Activated B cell treated with CpG ODN at 0.5 μM for 24 hours (primary cell): ENCODE measurements at regions of chr7 and their contacts with region 1.

Region 1: DNA sequence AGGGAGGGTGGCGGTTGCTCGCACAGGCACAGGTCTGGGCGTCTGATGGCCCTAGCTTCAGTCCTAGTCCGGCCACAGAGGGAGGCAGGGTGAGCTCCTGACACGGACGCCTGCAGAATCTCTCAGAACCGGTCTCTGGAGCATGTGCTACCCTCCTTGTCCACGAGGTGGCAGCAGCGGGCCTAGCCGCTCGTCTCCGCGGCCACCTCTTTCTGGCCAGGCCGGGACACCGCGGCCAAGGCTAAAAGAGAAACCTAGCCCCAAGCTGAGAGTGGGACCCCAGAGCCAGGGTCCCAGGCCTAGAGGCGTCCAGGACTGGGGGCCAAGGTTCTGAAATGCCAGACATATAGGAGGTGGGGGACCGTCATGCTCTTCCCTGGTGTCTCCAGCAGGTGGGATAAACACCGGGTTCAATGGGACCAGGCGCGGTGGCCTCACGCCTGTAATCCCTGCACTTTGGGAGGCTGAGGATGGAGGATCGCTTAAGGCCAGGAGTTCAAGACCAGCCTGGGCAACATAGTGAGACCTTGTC is 3.2 kb upstream of the LAT2 start:
- DNase-seq: peak; percentile 88
- ATAC-seq: peak; percentile 41
- H3K4me3 Mint-ChIP-seq: peak overlapping the region; percentile 63
- H3K27ac Mint-ChIP-seq: peak overlapping the region; percentile 50
- H3K4me1 Mint-ChIP-seq: peaks cover 61% of the 10 kb centered on the region
- H3K27me3 Mint-ChIP-seq: no peaks in the 10 kb centered on the region
- CTCF ChIP-seq: peak; percentile 31

Region 2: DNA sequence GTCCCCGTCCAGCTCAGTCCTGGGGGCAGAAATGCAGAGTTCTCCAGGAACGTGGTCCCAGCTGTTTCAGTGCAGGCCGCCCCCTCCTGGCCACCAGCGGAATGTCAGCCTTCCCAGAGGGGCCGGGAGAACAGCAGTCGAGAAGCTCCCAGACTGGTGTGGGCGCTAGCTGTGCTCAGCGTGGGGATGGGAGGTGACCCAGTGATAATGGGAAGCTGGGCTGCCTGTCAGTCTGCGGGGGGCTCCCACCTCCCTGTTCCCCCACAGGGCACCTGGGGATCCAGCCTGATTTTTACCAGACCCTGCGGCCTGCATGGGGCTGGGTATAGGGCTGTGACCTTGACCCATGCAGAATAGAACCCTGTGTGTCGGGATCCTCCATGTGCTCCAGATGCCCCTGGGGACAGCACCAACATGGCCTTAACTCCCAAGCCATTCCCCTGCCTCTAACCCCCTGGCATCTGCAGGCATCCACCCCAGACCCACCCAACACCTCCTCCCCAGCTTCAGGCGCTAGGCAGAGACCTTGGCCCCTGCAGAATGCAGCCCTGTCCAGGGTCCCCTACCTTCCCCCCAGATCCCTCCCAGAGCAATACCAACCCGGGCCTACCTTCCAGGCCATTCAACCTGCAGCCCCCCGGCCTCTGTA is 179.6 kb before region 1 on chr7:
- CTCF ChIA-PET with region 1: no interaction called
- POLR2A ChIA-PET with region 1: no interaction called
- intact Hi-C with region 1: no loop called
- DNase-seq: peak; percentile 62
- ATAC-seq: peak; percentile 85
- H3K4me3 Mint-ChIP-seq: no peak overlapping the region
- H3K27ac Mint-ChIP-seq: no peak overlapping the region
- H3K4me1 Mint-ChIP-seq: peaks cover 8% of the 10 kb centered on the region
- H3K27me3 Mint-ChIP-seq: peaks cover 56% of the 10 kb centered on the region
- CTCF ChIP-seq: peak; percentile 76

Region 3: DNA sequence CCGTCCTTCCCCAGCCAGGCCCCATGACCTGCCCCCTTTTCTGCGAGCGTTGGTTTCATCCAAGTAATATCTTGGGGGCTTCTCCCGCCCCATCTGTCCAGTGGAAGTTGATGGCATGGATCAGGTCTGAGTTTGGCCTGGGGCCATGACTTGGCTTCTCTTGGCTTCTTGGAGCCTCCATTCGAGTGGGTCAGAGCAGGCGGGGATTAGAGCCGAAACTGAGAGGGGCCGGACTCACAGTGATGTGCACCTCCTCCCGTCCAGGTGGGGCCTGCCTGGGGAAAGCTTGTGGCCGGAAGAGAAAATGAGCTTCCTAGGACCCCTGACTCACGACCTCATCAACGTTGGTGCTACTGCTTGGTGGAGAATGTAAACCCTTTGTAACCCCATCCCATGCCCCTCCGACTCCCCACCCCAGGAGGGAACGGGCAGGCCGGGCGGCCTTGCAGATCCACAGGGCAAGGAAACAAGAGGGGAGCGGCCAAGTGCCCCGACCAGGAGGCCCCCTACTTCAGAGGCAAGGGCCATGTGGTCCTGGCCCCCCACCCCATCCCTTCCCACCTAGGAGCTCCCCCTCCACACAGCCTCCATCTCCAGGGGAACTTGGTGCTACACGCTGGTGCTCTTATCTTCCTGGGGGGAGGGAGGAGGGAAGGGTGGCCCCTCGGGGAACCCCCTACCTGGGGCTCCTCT is 138.1 kb before region 1 on chr7:
- CTCF ChIA-PET with region 1: interaction called, 10 read pairs
- POLR2A ChIA-PET with region 1: interaction called, 3 read pairs
- intact Hi-C with region 1: loop called (anchors 1 kb)
- DNase-seq: no peak
- ATAC-seq: no peak
- H3K4me3 Mint-ChIP-seq: no peak overlapping the region
- H3K27ac Mint-ChIP-seq: no peak overlapping the region
- H3K4me1 Mint-ChIP-seq: peaks cover 2% of the 10 kb centered on the region
- H3K27me3 Mint-ChIP-seq: no peaks in the 10 kb centered on the region
- CTCF ChIP-seq: no peak

Region 4: DNA sequence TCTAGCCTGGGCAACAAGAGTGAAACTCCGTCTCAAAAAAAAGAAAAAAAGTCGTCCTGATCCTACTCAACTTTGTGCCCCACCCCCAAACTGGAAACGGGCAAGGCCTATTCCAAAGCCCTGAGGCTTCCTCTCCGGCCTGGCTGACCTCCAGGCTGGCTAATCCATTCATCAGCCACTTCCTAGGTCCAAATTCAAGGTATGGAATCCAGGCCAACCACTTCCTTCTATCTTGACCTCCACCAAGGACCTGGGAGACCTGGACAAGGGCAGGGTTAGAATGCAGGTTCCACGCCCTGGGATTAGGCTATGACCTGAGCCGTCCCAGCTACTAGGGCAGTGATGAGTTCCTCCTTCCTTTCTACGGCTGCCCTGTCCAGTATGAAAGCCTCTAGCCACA is 52.9 kb before region 1 on chr7:
- CTCF ChIA-PET with region 1: no interaction called
- POLR2A ChIA-PET with region 1: no interaction called
- intact Hi-C with region 1: no loop called
- DNase-seq: no peak
- ATAC-seq: no peak
- H3K4me3 Mint-ChIP-seq: no peak overlapping the region
- H3K27ac Mint-ChIP-seq: no peak overlapping the region
- H3K4me1 Mint-ChIP-seq: peaks cover 4% of the 10 kb centered on the region
- H3K27me3 Mint-ChIP-seq: peaks cover 2% of the 10 kb centered on the region
- CTCF ChIP-seq: no peak

Region 5: GRCh38 chr7:74217455-74218342 is 11.0 kb after region 1 on chr7:
- CTCF ChIA-PET with region 1: interaction called, 11 read pairs
- POLR2A ChIA-PET with region 1: interaction called, 87 read pairs
- intact Hi-C with region 1: loop called (anchors 1 kb)
- DNase-seq: peak; percentile 51
- ATAC-seq: peak; percentile 59
- H3K4me3 Mint-ChIP-seq: peak overlapping the region; percentile 69
- H3K27ac Mint-ChIP-seq: peak overlapping the region; percentile 90
- H3K4me1 Mint-ChIP-seq: peaks cover 63% of the 10 kb centered on the region
- H3K27me3 Mint-ChIP-seq: no peaks in the 10 kb centered on the region
- CTCF ChIP-seq: no peak

Region 6: GRCh38 chr7:74236284-74236683 is 29.6 kb after region 1 on chr7:
- CTCF ChIA-PET with region 1: interaction called, 16 read pairs
- POLR2A ChIA-PET with region 1: interaction called, 142 read pairs
- intact Hi-C with region 1: loop called (anchors 1 kb)
- DNase-seq: no peak
- ATAC-seq: no peak
- H3K4me3 Mint-ChIP-seq: no peak overlapping the region
- H3K27ac Mint-ChIP-seq: no peak overlapping the region
- H3K4me1 Mint-ChIP-seq: peaks cover 42% of the 10 kb centered on the region
- H3K27me3 Mint-ChIP-seq: no peaks in the 10 kb centered on the region
- CTCF ChIP-seq: no peak

Region 7: GRCh38 chr7:74254129-74254857 is 47.6 kb after region 1 on chr7 and contains the start of gene RFC2:
- CTCF ChIA-PET with region 1: interaction called, 8 read pairs
- POLR2A ChIA-PET with region 1: interaction called, 24 read pairs
- intact Hi-C with region 1: loop called (anchors 1 kb)
- DNase-seq: peak; percentile 100
- ATAC-seq: peak; percentile 92
- H3K4me3 Mint-ChIP-seq: peak within 1 kb of the TSS; percentile 95
- H3K27ac Mint-ChIP-seq: peak within 1 kb of the TSS; percentile 93
- H3K4me1 Mint-ChIP-seq: peaks cover 50% of the 10 kb centered on the region
- H3K27me3 Mint-ChIP-seq: no peaks in the 10 kb centered on the region
- CTCF ChIP-seq: no peak
- total RNA-seq, gene RFC2: 44.0 and 45.8 TPM in 2 replicates

Region 8: GRCh38 chr7:74289018-74289658 is 82.5 kb after region 1 on chr7 and contains the start of gene CLIP2:
- CTCF ChIA-PET with region 1: interaction called, 12 read pairs
- POLR2A ChIA-PET with region 1: interaction called, 150 read pairs
- intact Hi-C with region 1: loop called (anchors 1 kb)
- DNase-seq: peak; percentile 69
- ATAC-seq: peak; percentile 62
- H3K4me3 Mint-ChIP-seq: peak within 1 kb of the TSS; percentile 91
- H3K27ac Mint-ChIP-seq: peak within 1 kb of the TSS; percentile 91
- H3K4me1 Mint-ChIP-seq: peaks cover 62% of the 10 kb centered on the region
- H3K27me3 Mint-ChIP-seq: no peaks in the 10 kb centered on the region
- CTCF ChIP-seq: no peak
- total RNA-seq, gene CLIP2: 60.4 and 61.7 TPM in 2 replicates

Region 9: DNA sequence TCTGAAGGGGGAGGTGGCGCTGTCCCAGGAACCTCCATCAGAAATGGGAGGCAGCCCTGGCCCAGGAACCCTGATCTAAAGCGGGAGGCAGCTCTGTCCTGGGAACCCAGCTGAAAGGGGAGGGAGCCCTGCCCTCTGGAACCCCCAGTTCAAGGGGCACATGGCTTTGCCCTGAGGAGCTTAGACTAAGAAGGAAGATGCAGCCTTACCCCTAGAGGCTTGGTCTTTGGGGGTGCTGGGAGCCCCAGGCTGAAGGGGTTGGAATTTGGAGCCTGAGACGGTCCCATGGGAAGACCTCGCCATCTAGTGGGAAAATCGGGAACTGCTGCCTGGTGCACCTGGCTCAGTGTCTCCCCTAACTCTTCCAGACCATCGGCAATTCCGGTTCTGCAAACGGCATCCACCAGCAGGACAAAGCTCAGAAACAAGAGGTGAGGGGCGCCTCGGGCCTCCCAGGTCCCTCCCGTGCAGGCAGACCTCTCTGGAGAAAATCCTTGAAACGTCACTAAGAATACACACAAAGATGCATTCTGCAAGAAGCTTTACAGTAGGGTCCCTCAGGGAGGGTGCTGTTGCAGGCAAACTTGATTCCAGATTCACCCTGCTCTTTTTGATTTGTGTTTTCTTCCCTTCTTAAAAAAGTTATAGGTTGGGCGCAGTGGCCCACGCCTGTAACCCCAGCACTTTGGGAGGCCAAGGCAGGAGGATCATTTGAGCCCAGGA is 194.6 kb after region 1 on chr7:
- CTCF ChIA-PET with region 1: interaction called, 133 read pairs
- POLR2A ChIA-PET with region 1: interaction called, 15 read pairs
- intact Hi-C with region 1: loop called (anchors 1 kb)
- DNase-seq: peak; percentile 69
- ATAC-seq: peak; percentile 84
- H3K4me3 Mint-ChIP-seq: no peak overlapping the region
- H3K27ac Mint-ChIP-seq: no peak overlapping the region
- H3K4me1 Mint-ChIP-seq: no peaks in the 10 kb centered on the region
- H3K27me3 Mint-ChIP-seq: no peaks in the 10 kb centered on the region
- CTCF ChIP-seq: no peak